ENCODE measurements at regions of chr20 and their contacts with region 1.

Region 1: DNA sequence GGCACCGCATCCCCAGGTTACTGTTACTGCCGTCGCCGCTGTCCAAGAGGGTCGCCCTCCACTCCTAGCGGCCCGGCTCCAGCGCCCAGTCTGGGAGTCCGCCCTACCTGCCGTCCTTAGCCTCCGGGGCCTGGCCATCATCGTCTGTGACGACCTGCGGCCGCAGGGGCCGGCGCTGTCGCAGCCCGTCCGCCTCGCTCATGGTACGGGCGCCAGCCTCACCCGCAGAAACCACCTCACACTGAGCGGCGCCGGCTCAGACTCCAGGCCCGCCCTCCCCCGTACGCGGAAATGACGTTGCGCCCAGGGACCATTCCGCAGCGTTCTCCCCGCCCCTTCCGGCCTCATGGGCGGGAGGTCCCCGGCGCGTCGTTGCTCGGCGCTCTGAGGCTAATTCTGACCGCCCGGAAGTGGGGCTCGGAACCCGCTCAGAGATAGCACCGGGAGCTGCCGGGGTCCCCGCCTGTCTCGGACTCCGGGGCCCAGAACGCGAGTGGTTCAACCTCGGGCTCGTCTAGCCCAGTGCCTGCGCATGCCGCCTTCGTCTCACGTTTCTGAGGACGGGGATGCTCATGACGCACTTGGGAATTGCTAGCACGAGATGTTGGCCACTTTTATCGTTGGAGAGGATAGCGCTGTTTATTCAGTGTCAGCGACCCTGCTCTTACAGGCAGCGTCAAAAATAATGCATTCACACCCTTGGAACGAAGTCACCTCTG is at the start of gene APMAP:
- DNase-seq: peak; percentile 96
- CTCF ChIP-seq: no peak

Region 2: DNA sequence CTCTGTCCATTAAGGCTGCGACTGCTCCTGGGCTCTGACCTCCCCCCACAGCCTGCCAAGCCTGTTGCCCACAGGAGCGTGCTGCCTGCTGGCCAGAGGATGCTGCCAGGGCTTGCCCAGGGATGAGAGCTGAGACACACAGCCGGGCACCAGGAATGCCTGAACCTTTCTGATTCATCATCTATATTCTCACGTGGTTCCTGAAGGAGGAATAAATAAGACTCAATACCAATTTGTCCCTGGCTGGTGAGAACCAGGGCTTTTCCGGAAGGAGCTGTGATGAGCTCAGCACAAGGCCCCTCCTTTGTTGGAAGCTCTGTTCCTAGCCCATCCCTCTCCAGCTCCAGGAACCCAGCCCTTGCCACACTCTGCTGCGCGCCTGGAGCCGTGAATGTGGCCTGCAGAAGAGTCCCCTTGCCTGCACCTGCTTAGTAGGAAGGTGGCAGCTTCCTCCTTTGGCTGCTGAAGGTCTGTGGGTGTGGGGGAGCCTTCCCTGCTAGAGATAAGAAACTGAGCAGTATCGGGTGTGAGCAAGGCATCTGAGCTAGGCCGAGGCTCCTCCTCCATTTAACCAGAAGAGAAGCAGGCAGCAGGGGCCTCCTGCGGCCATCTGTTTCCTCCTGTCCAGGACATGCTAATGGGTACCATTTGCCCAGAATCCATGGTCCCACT is 485.3 kb before region 1 on chr20:
- in situ Hi-C with region 1: no loop called
- DNase-seq: no peak
- CTCF ChIP-seq: no peak

Region 3: DNA sequence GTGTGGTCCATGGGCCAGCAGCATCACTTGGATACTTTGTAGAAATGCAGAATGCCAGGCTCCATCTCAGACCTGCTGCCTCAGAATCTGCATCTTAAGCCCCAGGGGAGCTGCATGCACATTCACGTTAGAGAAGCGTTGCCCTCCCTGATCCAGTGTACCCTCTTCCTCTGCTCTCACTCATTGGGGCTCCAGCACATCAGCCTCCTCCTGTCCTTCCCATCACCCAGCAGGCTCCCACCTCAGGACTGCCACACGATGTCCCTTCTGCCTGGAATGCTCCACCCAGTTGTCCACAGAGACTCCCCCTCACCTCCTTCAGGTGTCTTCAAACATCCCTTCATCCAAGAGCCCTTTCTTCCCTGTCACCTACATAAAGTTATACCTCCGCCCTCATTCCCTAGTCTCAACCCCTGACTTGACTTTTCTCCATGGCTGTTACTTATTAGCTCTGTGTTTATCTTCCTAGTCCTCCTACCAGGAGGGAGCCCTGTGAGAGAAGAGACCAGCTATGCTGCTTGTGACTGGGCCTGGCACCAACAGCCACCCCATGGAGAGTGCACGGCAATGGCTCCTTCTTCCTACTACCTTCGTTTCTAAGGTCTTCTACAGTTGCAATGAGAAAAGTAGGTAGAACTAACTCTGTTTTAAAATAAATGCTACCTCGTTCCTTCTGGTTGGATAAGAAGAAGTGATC is 68.6 kb after region 1 on chr20:
- in situ Hi-C with region 1: loop called (anchors 5 kb)
- DNase-seq: no peak
- CTCF ChIP-seq: no peak

Region 4: DNA sequence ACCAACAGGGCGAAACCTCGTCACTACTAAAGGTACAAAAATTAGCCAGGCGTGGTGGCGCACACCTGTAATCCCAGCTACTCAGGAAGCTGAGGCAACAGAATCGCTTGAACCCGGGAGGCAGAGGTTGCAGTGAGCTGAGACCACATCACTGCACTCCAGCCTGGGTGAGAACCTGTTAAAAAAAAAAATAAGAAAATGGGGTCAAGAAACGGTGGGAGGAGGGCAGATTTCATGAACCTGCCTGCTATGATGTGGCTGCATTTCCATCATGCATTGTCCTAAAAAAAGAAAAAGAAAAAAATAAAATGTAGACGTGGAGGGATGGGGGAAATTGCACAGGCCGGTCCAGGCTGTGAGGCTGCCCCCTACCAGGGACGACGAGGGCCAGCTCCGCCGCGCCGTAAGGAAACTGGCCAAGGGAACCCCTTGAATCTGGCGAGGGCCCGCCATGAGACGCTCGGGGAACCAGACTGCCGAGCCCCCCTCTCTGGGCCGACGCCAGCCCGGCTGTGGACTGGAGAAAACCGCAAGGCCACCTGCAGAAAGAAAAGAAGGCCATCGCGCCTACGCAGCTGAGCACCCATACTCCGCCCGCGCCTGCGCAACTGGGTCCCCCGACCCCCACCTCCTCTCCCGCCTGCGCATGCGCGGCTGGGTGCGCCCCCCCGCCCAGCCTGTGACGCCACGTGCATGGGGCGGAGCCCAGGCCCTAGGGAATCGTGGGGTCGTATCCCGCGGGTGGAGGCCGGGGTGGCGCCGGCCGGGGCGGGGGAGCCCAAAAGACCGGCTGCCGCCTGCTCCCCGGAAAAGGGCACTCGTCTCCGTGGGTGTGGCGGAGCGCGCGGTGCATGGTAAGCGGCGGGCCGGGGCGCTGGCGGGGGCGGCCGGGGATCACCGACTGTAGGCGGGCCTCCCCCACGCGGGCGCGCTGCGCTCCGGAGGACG is 202.6 kb after region 1 on chr20 and contains the start of gene ENTPD6:
- in situ Hi-C with region 1: loop called (anchors 25 kb)
- DNase-seq: peak; percentile 98
- CTCF ChIP-seq: peak; percentile 20

Region 5: DNA sequence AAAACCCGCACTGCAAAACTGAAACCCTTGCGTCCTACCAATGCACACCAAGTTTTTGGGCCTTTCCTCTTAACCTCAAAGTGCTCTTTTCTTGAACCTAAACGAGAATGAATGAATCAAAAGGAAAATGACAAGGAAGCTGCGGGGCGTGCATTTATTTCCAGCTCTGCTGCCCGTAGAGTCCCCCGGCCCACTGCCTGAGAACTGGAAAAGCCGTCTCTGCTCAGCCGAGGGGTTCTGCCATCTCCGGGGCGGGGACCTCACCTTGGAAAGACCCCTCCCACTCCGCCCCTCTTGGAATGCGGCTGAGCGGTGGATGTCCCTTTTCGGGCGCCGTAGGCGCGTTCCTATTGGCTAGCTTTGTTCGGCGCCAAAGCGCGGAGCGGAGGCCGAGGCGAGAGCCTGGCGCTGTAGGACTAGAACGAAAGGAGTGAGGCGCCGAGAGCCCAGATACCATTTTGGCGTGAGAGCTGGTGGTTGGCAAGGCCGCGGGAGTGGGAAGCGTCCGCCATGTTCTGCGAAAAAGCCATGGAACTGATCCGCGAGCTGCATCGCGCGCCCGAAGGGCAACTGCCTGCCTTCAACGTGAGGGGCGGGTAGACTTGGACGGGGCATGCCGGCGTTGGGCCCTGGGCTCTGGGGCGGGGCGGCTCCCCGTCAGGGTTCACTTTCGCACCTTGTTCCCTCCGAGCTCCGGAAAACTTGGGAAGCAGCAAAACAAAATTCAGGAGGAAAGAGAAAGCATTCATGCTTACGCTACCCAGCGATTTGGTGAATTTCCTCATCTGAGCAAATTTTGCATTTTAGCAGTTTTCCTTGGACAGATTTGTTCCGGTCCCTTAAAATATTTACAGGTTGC is 414.9 kb after region 1 on chr20 and contains the start of gene GINS1:
- in situ Hi-C with region 1: loop called (anchors 25 kb)
- DNase-seq: peak; percentile 87
- CTCF ChIP-seq: no peak

Measured in GM13977 (cell line).